Breast epithelium (tissue), 4 donors: ENCODE measurements at regions of chr4 and their contacts with region 1.

Region 1: GRCh38 chr4:6269616-6270511 is at the start of gene WFS1:
- DNase-seq: peak; percentile 99
- H3K4me3 ChIP-seq: peak within 1 kb of the TSS; percentile 91 to 96 (median 92)
- H3K27ac ChIP-seq: peak within 1 kb of the TSS; percentile 79 to 87
- H3K4me1 ChIP-seq: peaks cover 11 to 25% of the 10 kb centered on the region in 2 donors
- H3K27me3 ChIP-seq: no peaks in the 10 kb centered on the region
- CTCF ChIP-seq: no peak
- POLR2A ChIP-seq: peak; percentile 54
- total RNA-seq, gene WFS1: 32.5 to 58.3 (median 37.1) TPM

Region 2: GRCh38 chr4:6128221-6128850 is 141.5 kb before region 1 on chr4:
- intact Hi-C with region 1: no loop called
- DNase-seq: no peak
- H3K4me3 ChIP-seq: no peak overlapping the region
- H3K27ac ChIP-seq: no peak overlapping the region
- H3K4me1 ChIP-seq: no peaks in the 10 kb centered on the region
- H3K27me3 ChIP-seq: peaks cover 0 to 4% of the 10 kb centered on the region in 2 donors
- CTCF ChIP-seq: no peak
- POLR2A ChIP-seq: no peak

Region 3: GRCh38 chr4:8144359-8144758 is 1874.5 kb after region 1 on chr4:
- intact Hi-C with region 1: loop called (anchors 5 kb)
- DNase-seq: no peak
- H3K4me3 ChIP-seq: no peak overlapping the region
- H3K27ac ChIP-seq: no peak overlapping the region
- H3K4me1 ChIP-seq: no peaks in the 10 kb centered on the region
- H3K27me3 ChIP-seq: peaks cover 0 to 17% of the 10 kb centered on the region in 2 donors
- CTCF ChIP-seq: no peak
- POLR2A ChIP-seq: no peak